PC-9 (cell line): ENCODE measurements at regions of chr3 and their contacts with region 1.

Region 1: GRCh38 chr3:13249667-13250390 is 170.3 kb downstream of the NUP210 start:
- DNase-seq: no peak
- H3K4me3 ChIP-seq: no peak overlapping the region
- H3K27ac ChIP-seq: no peak overlapping the region
- H3K4me1 ChIP-seq: no peaks in the 10 kb centered on the region; the same call in 1 of the 2 replicates
- H3K27me3 ChIP-seq: no peaks in the 10 kb centered on the region
- CTCF ChIP-seq: no peak

Region 2: GRCh38 chr3:13034109-13034800 is 215.6 kb before region 1 on chr3:
- CTCF ChIA-PET with region 1: no interaction called
- POLR2A ChIA-PET with region 1: no interaction called
- intact Hi-C with region 1: no loop called
- DNase-seq: no peak
- H3K4me3 ChIP-seq: no peak overlapping the region
- H3K27ac ChIP-seq: no peak overlapping the region
- H3K4me1 ChIP-seq: no peaks in the 10 kb centered on the region
- H3K27me3 ChIP-seq: no peaks in the 10 kb centered on the region
- CTCF ChIP-seq: no peak

Region 3: DNA sequence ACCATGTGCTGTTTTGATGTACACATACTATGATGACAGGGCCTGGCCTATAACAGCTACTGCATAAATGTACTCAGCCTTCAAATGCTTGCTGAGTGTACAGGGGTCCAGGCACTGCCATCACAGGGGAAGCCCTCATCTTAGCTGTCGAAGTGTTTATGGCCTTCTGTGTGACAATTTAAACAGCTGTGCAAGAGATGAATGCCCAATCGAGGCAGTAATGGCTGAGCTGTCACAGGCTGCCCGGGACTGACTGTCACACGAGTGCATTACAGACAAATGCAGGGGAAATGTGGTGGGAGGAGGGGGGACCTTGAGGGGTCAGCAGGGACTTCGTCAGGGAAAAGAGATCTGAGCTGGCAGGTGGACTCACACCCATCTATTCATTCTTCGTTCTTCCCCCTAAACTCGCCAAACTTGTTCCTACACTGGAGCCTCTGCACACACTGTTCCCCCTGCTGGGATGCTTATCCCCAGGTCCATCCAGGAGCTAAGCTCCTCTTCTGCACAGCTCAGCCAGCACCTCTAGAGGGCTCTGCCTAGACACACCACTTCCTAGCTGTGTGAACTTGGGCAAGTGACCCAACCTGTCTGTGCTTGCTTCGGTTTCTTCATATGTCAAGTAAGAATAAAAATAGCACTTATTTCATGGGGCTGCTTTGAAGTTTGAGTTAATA is 20.4 kb before region 1 on chr3:
- CTCF ChIA-PET with region 1: interaction called, 13 read pairs
- POLR2A ChIA-PET with region 1: no interaction called
- intact Hi-C with region 1: no loop called
- DNase-seq: peak; percentile 52 to 81
- H3K4me3 ChIP-seq: no peak overlapping the region
- H3K27ac ChIP-seq: no peak overlapping the region
- H3K4me1 ChIP-seq: peaks cover 12% of the 10 kb centered on the region
- H3K27me3 ChIP-seq: no peaks in the 10 kb centered on the region
- CTCF ChIP-seq: peak; percentile 68